ENCODE measurements at regions of chr7 and their contacts with region 1.

Region 1: DNA sequence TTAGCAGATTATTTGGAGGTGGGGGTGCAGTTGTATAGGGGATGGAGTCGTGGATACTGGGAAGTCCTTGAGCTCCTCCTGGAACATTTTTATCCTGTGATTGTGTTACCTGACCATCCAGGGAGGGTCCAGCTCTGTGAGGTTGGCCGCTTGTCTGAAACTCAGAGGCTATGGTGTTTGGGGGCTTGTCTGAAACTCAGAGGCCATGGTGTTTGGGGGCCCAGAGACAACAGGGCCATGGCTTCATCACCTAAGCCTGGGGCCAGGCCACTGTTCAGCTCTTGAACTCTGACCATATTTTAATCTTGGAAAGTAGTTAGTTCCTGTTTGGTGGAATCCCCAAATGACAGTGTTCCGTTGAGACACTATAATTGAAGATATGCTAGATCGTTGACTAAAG is 66.1 kb downstream of the TRRAP start:
- DNase-seq: no peak
- ATAC-seq: no peak
- H3K4me3 ChIP-seq: no peak overlapping the region
- H3K27ac ChIP-seq: no peak overlapping the region
- H3K4me1 ChIP-seq: no peaks in the 10 kb centered on the region
- H3K27me3 ChIP-seq: no peaks in the 10 kb centered on the region
- CTCF ChIP-seq: no peak
- POLR2A ChIP-seq: no peak
- RAD21 ChIP-seq: no peak

Region 2: DNA sequence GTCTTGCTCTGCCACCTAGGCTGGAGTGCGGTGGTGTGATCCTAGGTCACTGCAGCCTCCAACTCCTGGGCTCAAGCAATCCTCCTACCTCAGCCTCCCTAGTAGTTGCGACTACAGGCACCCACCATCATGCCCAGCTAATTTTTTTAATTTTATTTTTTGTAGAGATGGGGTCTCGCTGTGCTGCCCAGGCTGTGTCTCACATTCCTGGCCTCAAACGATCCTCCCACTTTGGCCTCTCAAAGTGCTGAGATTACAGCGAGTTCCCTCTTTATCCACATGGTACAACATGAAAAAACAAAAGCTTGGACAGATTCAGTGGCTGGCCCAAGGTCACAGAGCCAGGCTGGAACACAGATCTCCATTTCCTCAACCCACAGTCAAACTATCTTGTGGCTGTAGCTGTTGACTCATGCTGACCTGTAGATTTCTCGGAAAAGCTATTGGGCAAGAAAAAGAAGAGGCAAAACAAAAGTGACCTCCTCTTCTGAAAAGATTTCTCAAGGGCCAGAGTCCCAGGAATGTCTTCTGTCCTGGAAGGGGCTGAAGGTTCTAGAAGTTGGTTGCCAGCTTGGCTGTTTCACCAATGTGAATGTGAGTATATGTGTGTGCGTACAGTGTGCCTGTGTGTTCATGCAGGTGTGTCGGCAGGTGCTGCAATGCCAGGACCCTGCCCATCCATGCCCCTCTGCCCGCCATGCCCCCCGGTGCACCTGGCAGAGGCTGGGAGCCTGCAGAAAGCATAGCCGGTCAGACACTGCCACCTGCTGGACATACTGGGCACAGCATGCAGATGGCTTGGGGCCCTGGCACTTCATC is 103.0 kb before region 1 on chr7:
- CTCF ChIA-PET with region 1: no interaction called
- POLR2A ChIA-PET with region 1: no interaction called
- dilution Hi-C with region 1: no loop called
- in situ Hi-C with region 1: no loop called
- intact Hi-C with region 1: no loop called
- DNase-seq: peak; percentile 85
- ATAC-seq: peak; percentile 88
- H3K4me3 ChIP-seq: no peak overlapping the region
- H3K27ac ChIP-seq: peak overlapping the region; percentile 26; the same call in 1 of the 2 replicates
- H3K4me1 ChIP-seq: peaks cover 5% of the 10 kb centered on the region; the same call in 1 of the 2 replicates
- H3K27me3 ChIP-seq: no peaks in the 10 kb centered on the region; the same call in 1 of the 2 replicates
- CTCF ChIP-seq: peak; percentile 90
- POLR2A ChIP-seq: no peak
- RAD21 ChIP-seq: peak; percentile 93

Region 3: DNA sequence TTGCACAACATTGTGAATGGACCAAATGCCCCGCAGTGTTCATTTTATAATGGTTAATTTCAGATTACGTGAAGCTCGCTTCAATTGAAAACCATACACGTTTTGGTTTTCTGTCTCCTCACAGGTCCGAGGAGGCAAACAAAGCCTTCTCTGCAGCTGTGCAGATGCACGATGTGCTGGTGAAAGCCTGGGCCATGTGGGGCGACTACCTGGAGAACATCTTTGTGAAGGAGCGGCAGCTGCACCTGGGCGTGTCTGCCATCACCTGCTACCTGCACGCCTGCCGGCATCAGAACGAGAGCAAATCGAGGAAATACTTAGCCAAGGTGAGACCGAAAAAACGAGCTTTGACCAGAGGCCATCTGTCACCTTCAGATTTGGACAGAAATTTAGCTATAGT is 44.3 kb after region 1 on chr7:
- CTCF ChIA-PET with region 1: no interaction called
- POLR2A ChIA-PET with region 1: no interaction called
- dilution Hi-C with region 1: no loop called
- in situ Hi-C with region 1: no loop called
- intact Hi-C with region 1: loop called (anchors 5 kb)
- DNase-seq: no peak
- ATAC-seq: no peak
- H3K4me3 ChIP-seq: no peak overlapping the region
- H3K27ac ChIP-seq: no peak overlapping the region
- H3K4me1 ChIP-seq: no peaks in the 10 kb centered on the region
- H3K27me3 ChIP-seq: no peaks in the 10 kb centered on the region
- CTCF ChIP-seq: no peak
- POLR2A ChIP-seq: no peak
- RAD21 ChIP-seq: no peak

Region 4: GRCh38 chr7:99407872-99408378 is 463.5 kb after region 1 on chr7:
- CTCF ChIA-PET with region 1: no interaction called
- POLR2A ChIA-PET with region 1: no interaction called
- dilution Hi-C with region 1: no loop called
- in situ Hi-C with region 1: no loop called
- intact Hi-C with region 1: no loop called
- DNase-seq: peak; percentile 86
- ATAC-seq: peak; percentile 46
- H3K4me3 ChIP-seq: peak overlapping the region; percentile 57
- H3K27ac ChIP-seq: peak overlapping the region; percentile 91
- H3K4me1 ChIP-seq: peaks cover 8% of the 10 kb centered on the region; the same call in 1 of the 2 replicates
- H3K27me3 ChIP-seq: no peaks in the 10 kb centered on the region
- CTCF ChIP-seq: no peak
- POLR2A ChIP-seq: peak; percentile 83; the same call in 1 of the 2 replicates
- RAD21 ChIP-seq: no peak

Region 5: GRCh38 chr7:99642027-99642426 is 697.6 kb after region 1 on chr7:
- CTCF ChIA-PET with region 1: no interaction called
- POLR2A ChIA-PET with region 1: no interaction called
- dilution Hi-C with region 1: no loop called
- in situ Hi-C with region 1: no loop called
- intact Hi-C with region 1: no loop called
- DNase-seq: peak; percentile 26
- ATAC-seq: peak; percentile 57
- H3K4me3 ChIP-seq: no peak overlapping the region
- H3K27ac ChIP-seq: no peak overlapping the region
- H3K4me1 ChIP-seq: no peaks in the 10 kb centered on the region
- H3K27me3 ChIP-seq: no peaks in the 10 kb centered on the region
- CTCF ChIP-seq: no peak
- POLR2A ChIP-seq: no peak
- RAD21 ChIP-seq: no peak